Common myeloid progenitor, CD34-positive (primary cell): ENCODE measurements at regions of chr9 and their contacts with region 1.

Region 1: GRCh38 chr9:21252721-21253547 is 13.1 kb upstream of the IFNA14 start:
- DNase-seq: peak; percentile 83 to 96 (median 93)
- H3K4me3 ChIP-seq: peak overlapping the region in 3 of 7 experiments; percentile 26 to 49 (median 26)
- H3K27ac ChIP-seq: no peak overlapping the region
- H3K4me1 ChIP-seq: peaks cover 19 to 42% (median 31%) of the 10 kb centered on the region in 4 experiments
- H3K27me3 ChIP-seq: no peaks in the 10 kb centered on the region

Region 2: GRCh38 chr9:21239911-21240310 is 13.0 kb before region 1 on chr9 and contains the start of gene IFNA14:
- CTCF ChIA-PET with region 1: interaction called, 11 read pairs
- POLR2A ChIA-PET with region 1: no interaction called
- DNase-seq: peak in 1 of 3 donors; percentile 2
- H3K4me3 ChIP-seq: no peak within 1 kb of the TSS
- H3K27ac ChIP-seq: no peak within 1 kb of the TSS
- H3K4me1 ChIP-seq: peaks cover 2 to 10% (median 5%) of the 10 kb centered on the region in 4 experiments
- H3K27me3 ChIP-seq: no peaks in the 10 kb centered on the region

Region 3: GRCh38 chr9:21267485-21268346 is 14.8 kb after region 1 on chr9:
- CTCF ChIA-PET with region 1: interaction called, 32 read pairs
- POLR2A ChIA-PET with region 1: no interaction called
- DNase-seq: peak in 2 of 3 donors; percentile 32 to 47
- H3K4me3 ChIP-seq: peak overlapping the region in 3 of 7 experiments; percentile 16 to 50 (median 24)
- H3K27ac ChIP-seq: no peak overlapping the region
- H3K4me1 ChIP-seq: peaks cover 0 to 19% (median 12%) of the 10 kb centered on the region in 4 experiments
- H3K27me3 ChIP-seq: no peaks in the 10 kb centered on the region

Region 4: GRCh38 chr9:21286659-21287058 is 33.7 kb after region 1 on chr9:
- CTCF ChIA-PET with region 1: interaction called, 14 read pairs
- POLR2A ChIA-PET with region 1: interaction called, 3 read pairs
- DNase-seq: no peak
- H3K4me3 ChIP-seq: no peak overlapping the region
- H3K27ac ChIP-seq: no peak overlapping the region
- H3K4me1 ChIP-seq: peaks cover 0 to 12% (median 6%) of the 10 kb centered on the region in 4 experiments
- H3K27me3 ChIP-seq: no peaks in the 10 kb centered on the region

Region 5: GRCh38 chr9:21317956-21318923 is 65.3 kb after region 1 on chr9:
- CTCF ChIA-PET with region 1: interaction called, 54 read pairs
- POLR2A ChIA-PET with region 1: no interaction called
- DNase-seq: peak; percentile 31 to 66 (median 63)
- H3K4me3 ChIP-seq: no peak overlapping the region
- H3K27ac ChIP-seq: no peak overlapping the region
- H3K4me1 ChIP-seq: peaks cover 0 to 9% (median 3%) of the 10 kb centered on the region in 4 experiments
- H3K27me3 ChIP-seq: peaks cover 0 to 3% (median 0%) of the 10 kb centered on the region in 5 experiments

Region 6: DNA sequence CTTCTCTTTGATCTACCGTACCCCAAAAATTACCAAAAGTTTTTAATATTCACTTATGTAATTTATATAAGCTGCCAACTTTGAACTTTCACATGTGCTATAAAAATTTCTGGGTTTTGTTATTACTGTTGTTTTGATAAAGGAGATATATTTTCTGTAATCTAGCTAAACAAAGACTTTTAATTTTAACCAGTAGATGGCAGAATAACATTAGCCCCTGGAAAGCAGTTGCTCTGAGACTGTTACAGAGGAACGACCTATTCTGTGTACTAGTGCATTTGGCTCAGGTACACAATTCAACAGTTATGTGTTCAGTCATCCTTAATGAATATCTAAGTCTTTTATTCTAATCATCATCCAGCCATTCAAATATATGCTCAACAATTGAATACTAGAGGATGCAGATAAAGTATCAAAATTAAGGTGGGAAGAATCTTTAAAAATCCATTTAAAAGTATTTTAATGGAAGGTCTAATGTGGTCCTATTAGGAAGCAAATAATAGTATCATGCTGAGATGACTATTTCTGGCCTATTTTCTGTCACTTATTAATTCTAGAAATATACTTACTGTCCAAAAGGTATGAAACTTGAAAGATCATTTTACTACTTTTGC is 73.7 kb after region 1 on chr9:
- CTCF ChIA-PET with region 1: interaction called, 54 read pairs
- POLR2A ChIA-PET with region 1: no interaction called
- DNase-seq: peak; percentile 55 to 76 (median 73)
- H3K4me3 ChIP-seq: no peak overlapping the region
- H3K27ac ChIP-seq: no peak overlapping the region
- H3K4me1 ChIP-seq: peaks cover 0 to 20% (median 13%) of the 10 kb centered on the region in 4 experiments
- H3K27me3 ChIP-seq: no peaks in the 10 kb centered on the region